ENCODE measurements at regions of chr6 and their contacts with region 1.

Region 1: GRCh38 chr6:146950351-146950835 is 253.8 kb upstream of the STXBP5 start:
- DNase-seq: peak; percentile 65
- H3K4me3 Mint-ChIP-seq: no peak overlapping the region
- H3K27ac Mint-ChIP-seq: peak overlapping the region; percentile 88
- H3K4me1 Mint-ChIP-seq: peaks cover 17% of the 10 kb centered on the region
- H3K27me3 Mint-ChIP-seq: no peaks in the 10 kb centered on the region

Region 2: GRCh38 chr6:145963216-145964068 is 987.0 kb before region 1 on chr6:
- CTCF ChIA-PET with region 1: no interaction called
- intact Hi-C with region 1: loop called (anchors 10 kb)
- DNase-seq: peak; percentile 58
- H3K4me3 Mint-ChIP-seq: peak overlapping the region; percentile 94
- H3K27ac Mint-ChIP-seq: peak overlapping the region; percentile 70
- H3K4me1 Mint-ChIP-seq: peaks cover 48% of the 10 kb centered on the region
- H3K27me3 Mint-ChIP-seq: no peaks in the 10 kb centered on the region

Region 3: GRCh38 chr6:146857180-146857979 is 93.0 kb before region 1 on chr6:
- CTCF ChIA-PET with region 1: no interaction called
- intact Hi-C with region 1: loop called (anchors 1 kb)
- DNase-seq: peak; percentile 84
- H3K4me3 Mint-ChIP-seq: no peak overlapping the region
- H3K27ac Mint-ChIP-seq: no peak overlapping the region
- H3K4me1 Mint-ChIP-seq: peaks cover 21% of the 10 kb centered on the region
- H3K27me3 Mint-ChIP-seq: peaks cover 2% of the 10 kb centered on the region

Region 4: GRCh38 chr6:146914489-146915483 is 35.6 kb before region 1 on chr6:
- CTCF ChIA-PET with region 1: no interaction called
- intact Hi-C with region 1: loop called (anchors 1 kb)
- DNase-seq: no peak
- H3K4me3 Mint-ChIP-seq: no peak overlapping the region
- H3K27ac Mint-ChIP-seq: no peak overlapping the region
- H3K4me1 Mint-ChIP-seq: peaks cover 23% of the 10 kb centered on the region
- H3K27me3 Mint-ChIP-seq: peaks cover 12% of the 10 kb centered on the region

Region 5: DNA sequence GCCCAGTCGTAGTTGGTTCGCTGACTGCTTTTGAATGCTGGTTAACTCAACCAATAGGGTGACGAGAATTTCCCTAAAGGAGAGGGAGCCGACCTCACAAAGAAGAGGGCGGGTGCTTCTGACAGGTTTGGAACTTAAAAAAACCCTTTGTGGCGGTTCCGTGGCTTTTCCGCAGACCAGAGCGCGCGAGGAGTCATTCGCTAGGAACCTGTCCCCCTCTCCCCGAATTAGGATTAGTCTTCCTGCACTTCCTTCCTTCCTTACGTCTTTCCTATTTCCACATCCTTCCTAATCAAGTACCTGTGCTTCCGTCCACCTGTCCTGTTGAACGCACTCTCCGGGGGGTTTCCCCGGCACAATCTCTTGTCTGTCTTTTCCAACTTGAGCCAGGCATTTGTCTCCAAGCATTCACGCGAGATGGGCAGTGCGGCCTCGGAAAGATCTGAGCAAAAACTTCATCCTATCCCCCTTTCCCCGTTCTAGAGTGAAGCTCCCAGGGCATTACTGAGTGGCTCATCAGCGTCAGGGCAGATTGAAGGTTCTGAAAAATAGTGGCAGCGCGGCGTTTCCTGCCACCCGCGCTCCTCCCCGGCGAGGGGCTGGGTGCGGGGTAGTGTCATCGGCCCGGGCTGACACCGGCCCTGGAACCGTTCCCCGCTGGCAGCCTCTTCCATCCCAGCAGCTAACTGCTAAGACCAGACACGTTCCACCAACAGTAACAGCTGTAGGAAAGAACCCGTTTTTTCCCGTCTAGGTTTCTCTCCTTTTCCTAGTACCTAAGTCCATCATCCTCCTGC is 252.3 kb after region 1 on chr6:
- CTCF ChIA-PET with region 1: no interaction called
- intact Hi-C with region 1: loop called (anchors 1 kb)
- DNase-seq: peak; percentile 88
- H3K4me3 Mint-ChIP-seq: peak overlapping the region; percentile 83
- H3K27ac Mint-ChIP-seq: peak overlapping the region; percentile 99
- H3K4me1 Mint-ChIP-seq: peaks cover 20% of the 10 kb centered on the region
- H3K27me3 Mint-ChIP-seq: no peaks in the 10 kb centered on the region

Region 6: DNA sequence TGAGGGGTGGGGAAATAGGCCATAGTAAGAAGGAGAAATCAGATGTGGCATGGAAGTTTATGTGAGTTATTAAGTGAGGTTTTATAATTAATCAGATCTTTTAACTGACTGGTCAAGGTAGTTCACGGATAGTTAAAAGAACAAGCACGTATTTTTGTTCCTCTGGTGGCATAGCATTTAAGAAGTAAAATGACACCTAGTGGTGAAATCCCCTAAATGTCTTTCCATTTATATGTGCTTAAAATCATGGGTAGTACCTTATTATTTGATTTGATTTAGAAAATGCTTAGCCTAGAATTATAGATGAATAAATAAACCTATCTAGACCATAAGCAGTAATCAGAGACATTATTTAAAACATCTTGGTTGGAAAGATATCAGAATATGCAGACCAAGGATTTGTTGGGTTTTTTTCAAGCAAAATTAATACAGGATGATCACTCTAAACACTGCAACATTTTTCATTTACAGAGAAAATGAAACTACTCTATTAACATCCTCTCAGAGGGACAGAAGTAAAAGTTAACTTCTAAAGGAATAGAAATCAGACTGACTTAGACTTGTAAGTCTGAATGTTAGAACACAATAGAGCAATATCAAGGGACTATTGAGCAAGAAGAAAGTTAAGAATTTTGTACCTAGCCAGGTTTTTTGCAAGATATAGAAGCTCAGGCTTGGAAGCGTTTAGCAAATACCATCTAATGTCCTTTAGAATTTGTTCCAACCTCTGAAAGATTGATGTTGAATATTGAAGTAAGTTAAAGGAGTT is 334.9 kb after region 1 on chr6:
- CTCF ChIA-PET with region 1: no interaction called
- intact Hi-C with region 1: loop called (anchors 1 kb)
- DNase-seq: no peak
- H3K4me3 Mint-ChIP-seq: no peak overlapping the region
- H3K27ac Mint-ChIP-seq: no peak overlapping the region
- H3K4me1 Mint-ChIP-seq: peaks cover 34% of the 10 kb centered on the region
- H3K27me3 Mint-ChIP-seq: no peaks in the 10 kb centered on the region